ENCODE measurements at regions of chr9 and their contacts with region 1.

Region 1: DNA sequence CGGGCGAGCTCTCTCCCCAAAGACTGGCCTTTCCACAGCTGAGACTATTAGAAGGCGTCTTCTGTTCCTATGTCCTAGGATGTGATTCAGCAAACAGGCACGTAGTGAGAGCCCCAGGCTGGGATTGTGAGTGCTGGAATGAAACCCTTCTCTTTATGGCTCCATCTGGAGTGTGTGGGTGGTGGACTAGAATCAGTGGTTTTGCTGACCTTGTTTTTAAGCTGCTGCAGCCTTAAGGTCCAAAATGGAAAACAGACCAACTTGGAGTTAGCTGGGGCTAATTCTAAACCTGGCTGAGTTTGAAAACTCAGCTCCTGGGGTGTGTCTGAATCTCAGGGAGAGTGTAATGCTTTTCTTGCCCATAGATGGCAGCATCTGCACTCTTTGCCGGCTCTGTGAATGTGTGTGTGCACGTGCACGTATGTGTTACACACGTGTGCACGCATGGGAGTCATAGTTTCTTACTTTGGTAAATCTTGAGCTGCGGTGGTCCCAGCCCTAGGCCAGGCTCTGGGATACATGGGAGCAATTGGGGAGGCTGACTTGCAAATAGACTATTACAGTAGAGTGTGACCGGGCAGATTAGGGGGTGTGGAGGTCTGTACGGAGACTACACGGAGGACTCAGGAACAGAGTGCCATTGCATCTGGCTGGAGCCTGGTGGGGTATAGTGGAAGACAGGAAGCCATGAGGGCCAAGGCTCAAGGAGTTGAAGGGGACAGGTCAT is 10.7 kb downstream of the GSN start:
- DNase-seq: peak; percentile 61
- ATAC-seq: peak; percentile 86
- H3K4me3 Mint-ChIP-seq: no peak overlapping the region
- H3K27ac Mint-ChIP-seq: no peak overlapping the region
- H3K4me1 Mint-ChIP-seq: peaks cover 5% of the 10 kb centered on the region
- H3K27me3 Mint-ChIP-seq: no peaks in the 10 kb centered on the region

Region 2: GRCh38 chr9:121169094-121169601 is 109.5 kb before region 1 on chr9:
- CTCF ChIA-PET with region 1: no interaction called
- DNase-seq: no peak
- ATAC-seq: peak; percentile 49
- H3K4me3 Mint-ChIP-seq: no peak overlapping the region
- H3K27ac Mint-ChIP-seq: peak overlapping the region; percentile 61
- H3K4me1 Mint-ChIP-seq: peaks cover 4% of the 10 kb centered on the region
- H3K27me3 Mint-ChIP-seq: no peaks in the 10 kb centered on the region

Region 3: DNA sequence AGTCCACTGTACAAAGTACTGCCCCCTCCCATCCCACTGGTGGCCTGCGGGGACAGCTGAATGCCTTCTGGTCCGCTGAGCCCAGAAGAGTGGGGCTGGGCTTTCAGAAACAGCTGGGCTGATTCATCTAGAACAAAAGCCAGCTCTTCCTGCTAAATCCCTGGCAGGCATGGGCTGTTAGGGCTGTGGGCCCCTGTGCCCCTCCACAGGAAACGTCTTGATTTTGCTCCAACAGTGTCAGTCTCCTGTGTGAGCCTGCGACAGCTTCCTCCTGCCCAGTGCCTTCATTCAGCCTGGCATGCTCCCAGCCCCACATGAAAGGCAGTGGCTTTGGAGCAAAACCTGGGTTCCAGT is 17.6 kb before region 1 on chr9:
- CTCF ChIA-PET with region 1: interaction called, 10 read pairs
- DNase-seq: no peak
- ATAC-seq: no peak
- H3K4me3 Mint-ChIP-seq: no peak overlapping the region
- H3K27ac Mint-ChIP-seq: no peak overlapping the region
- H3K4me1 Mint-ChIP-seq: no peaks in the 10 kb centered on the region
- H3K27me3 Mint-ChIP-seq: no peaks in the 10 kb centered on the region

Region 4: DNA sequence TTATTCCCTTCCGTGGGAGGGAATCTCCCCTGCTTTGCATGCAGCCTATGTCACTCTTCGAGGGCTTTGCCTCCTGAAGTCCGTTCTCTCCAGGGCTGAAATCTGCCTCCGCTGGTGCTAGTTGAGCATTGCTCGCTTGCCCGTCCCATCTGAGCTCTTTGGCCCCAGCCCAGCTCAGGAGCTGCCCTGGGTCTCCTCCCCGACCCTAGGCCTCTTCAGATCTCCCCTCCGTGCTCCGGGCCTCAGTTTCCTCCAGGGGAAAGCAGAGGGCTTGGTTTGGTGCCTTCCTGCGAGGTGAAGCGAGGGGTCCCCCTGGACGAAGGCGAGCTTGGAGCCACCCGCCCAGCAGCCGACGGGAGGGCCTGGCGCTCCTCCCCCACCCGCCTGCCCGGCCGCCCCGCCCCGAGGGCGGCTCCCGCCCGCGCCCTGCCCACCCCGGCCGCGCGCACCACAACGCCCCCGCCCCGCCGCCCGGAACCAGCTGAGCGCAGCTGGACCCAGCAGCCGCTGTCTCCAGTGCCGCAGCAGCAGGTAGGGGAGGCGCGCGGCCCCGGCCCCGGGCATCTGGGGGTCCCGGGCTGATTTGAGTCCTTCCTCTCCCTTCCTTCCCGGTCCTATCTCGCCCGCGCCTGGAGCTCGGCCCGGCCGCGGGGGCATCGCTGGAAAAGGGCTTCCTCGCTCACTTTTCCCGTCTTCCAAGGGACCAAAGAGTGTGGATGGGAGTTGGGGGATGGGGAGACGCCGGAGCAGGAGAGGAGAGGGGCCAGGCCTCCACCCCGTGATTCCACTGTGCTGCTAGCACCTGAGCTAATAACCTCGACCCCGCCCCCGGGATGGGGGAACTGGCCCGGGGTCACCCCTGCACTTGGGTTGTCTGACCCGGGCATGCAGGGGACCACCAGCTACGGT is 10.8 kb before region 1 on chr9 and contains the start of gene GSN:
- CTCF ChIA-PET with region 1: interaction called, 37 read pairs
- DNase-seq: peak; percentile 71
- ATAC-seq: peak; percentile 91
- H3K4me3 Mint-ChIP-seq: peak within 1 kb of the TSS; percentile 60
- H3K27ac Mint-ChIP-seq: no peak within 1 kb of the TSS
- H3K4me1 Mint-ChIP-seq: peaks cover 16% of the 10 kb centered on the region
- H3K27me3 Mint-ChIP-seq: peaks cover 13% of the 10 kb centered on the region
- total RNA-seq, gene GSN: 3.2 to 8.0 TPM

Region 5: DNA sequence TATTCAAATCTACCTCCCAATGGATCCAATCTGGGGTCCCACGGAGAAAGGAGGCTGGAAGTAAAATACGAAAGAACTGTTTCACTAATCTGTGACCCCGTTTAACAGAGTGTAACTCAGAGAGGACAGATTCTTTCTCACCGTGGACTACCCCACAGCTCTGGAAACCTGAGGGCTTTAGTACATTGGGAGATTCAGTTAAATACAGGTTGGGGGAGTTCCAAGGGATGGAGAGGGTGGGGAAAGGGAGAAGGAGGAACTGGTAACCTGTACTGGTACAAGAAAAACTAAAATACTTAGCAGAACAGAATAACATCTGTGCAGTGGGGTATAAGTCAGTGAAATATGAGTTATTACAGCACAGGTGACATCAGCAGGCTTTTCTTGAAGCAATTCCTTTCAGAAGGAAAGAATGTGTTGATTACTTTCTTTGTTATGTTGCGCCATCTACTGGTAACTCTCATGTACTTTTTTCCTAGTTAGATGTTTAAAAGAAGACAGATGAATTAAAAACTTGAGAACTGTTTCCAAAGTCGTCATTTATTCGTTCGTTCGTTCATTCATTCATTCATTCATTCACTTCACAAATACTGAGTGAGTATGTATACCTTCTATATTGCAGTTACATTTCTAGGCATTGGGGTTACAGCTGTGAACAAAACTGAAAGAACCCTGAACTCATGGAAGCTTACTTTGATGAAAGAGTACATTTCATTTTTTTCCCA is 121.3 kb after region 1 on chr9:
- CTCF ChIA-PET with region 1: interaction called, 13 read pairs
- DNase-seq: no peak
- ATAC-seq: peak; percentile 78
- H3K4me3 Mint-ChIP-seq: no peak overlapping the region
- H3K27ac Mint-ChIP-seq: no peak overlapping the region
- H3K4me1 Mint-ChIP-seq: peaks cover 8% of the 10 kb centered on the region
- H3K27me3 Mint-ChIP-seq: peaks cover 10% of the 10 kb centered on the region